IMR-90 (cell line): ENCODE measurements at regions of chr5 and their contacts with region 1.

Region 1: DNA sequence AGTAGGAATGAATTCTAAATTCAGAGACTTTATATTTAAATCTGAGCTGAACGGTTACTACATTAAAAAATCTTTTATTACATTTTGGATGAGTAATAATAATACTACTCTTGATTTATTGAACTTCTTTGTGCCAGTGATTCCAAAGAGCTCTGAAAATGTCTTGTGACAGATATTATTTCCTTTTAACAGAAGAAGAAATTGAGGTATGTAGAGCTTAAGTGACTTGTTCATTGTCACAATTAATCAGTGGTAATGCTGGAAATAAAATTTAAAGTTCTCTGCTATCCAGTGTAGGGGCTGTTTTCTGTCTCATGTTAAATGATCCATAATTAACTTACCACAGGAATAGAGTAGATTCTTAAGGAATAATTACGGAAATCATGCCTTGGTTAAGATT is 335.3 kb downstream of the KIAA0825 start:
- DNase-seq: no peak
- ATAC-seq: no peak
- H3K4me3 ChIP-seq: no peak overlapping the region
- H3K27ac ChIP-seq: no peak overlapping the region
- H3K4me1 ChIP-seq: no peaks in the 10 kb centered on the region
- H3K27me3 ChIP-seq: no peaks in the 10 kb centered on the region
- CTCF ChIP-seq: no peak
- POLR2A ChIP-seq: no peak
- RAD21 ChIP-seq: no peak

Region 2: GRCh38 chr5:94181895-94182294 is 101.2 kb before region 1 on chr5:
- CTCF ChIA-PET with region 1: no interaction called
- POLR2A ChIA-PET with region 1: no interaction called
- dilution Hi-C with region 1: no loop called
- in situ Hi-C with region 1: no loop called
- intact Hi-C with region 1: no loop called
- DNase-seq: peak; percentile 24
- ATAC-seq: peak; percentile 75
- H3K4me3 ChIP-seq: no peak overlapping the region
- H3K27ac ChIP-seq: no peak overlapping the region
- H3K4me1 ChIP-seq: no peaks in the 10 kb centered on the region
- H3K27me3 ChIP-seq: no peaks in the 10 kb centered on the region
- CTCF ChIP-seq: peak; percentile 33
- POLR2A ChIP-seq: no peak
- RAD21 ChIP-seq: no peak

Region 3: DNA sequence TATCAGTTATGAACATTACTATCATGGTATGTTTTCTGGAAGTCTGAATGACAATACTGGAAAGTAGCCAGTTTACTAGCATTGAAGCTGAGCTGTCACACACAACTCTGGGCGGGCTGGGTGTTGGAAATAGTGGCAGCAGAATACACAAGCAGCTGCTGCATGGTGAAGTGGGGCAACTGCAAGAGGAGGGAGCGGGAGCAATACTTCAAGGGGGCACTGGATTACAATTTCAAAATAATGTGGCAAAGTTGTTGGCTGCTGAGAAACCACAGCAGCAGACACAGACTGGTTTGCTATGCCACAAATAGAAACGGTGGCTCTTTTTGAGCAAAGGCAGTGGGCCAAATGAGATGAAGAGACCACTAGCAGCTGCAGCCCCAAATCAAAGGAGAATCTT is 14.9 kb before region 1 on chr5:
- CTCF ChIA-PET with region 1: no interaction called
- POLR2A ChIA-PET with region 1: no interaction called
- dilution Hi-C with region 1: no loop called
- in situ Hi-C with region 1: no loop called
- intact Hi-C with region 1: no loop called
- DNase-seq: no peak
- ATAC-seq: no peak
- H3K4me3 ChIP-seq: no peak overlapping the region
- H3K27ac ChIP-seq: no peak overlapping the region
- H3K4me1 ChIP-seq: no peaks in the 10 kb centered on the region
- H3K27me3 ChIP-seq: no peaks in the 10 kb centered on the region
- CTCF ChIP-seq: no peak
- POLR2A ChIP-seq: no peak
- RAD21 ChIP-seq: no peak

Region 4: GRCh38 chr5:94575196-94575595 is 292.1 kb after region 1 on chr5:
- CTCF ChIA-PET with region 1: no interaction called
- POLR2A ChIA-PET with region 1: no interaction called
- dilution Hi-C with region 1: no loop called
- in situ Hi-C with region 1: no loop called
- intact Hi-C with region 1: loop called (anchors 1 kb)
- DNase-seq: no peak
- ATAC-seq: no peak
- H3K4me3 ChIP-seq: no peak overlapping the region
- H3K27ac ChIP-seq: no peak overlapping the region
- H3K4me1 ChIP-seq: no peaks in the 10 kb centered on the region
- H3K27me3 ChIP-seq: no peaks in the 10 kb centered on the region
- CTCF ChIP-seq: no peak
- POLR2A ChIP-seq: no peak
- RAD21 ChIP-seq: no peak

Region 5: GRCh38 chr5:94613583-94613982 is 330.5 kb after region 1 on chr5:
- CTCF ChIA-PET with region 1: no interaction called
- POLR2A ChIA-PET with region 1: no interaction called
- dilution Hi-C with region 1: no loop called
- in situ Hi-C with region 1: no loop called
- intact Hi-C with region 1: no loop called
- DNase-seq: peak; percentile 13
- ATAC-seq: no peak
- H3K4me3 ChIP-seq: no peak overlapping the region
- H3K27ac ChIP-seq: no peak overlapping the region
- H3K4me1 ChIP-seq: no peaks in the 10 kb centered on the region
- H3K27me3 ChIP-seq: no peaks in the 10 kb centered on the region
- CTCF ChIP-seq: peak; percentile 30; the same call in 1 of the 2 replicates
- POLR2A ChIP-seq: no peak
- RAD21 ChIP-seq: no peak

Region 6: GRCh38 chr5:95184924-95185323 is 901.8 kb after region 1 on chr5:
- CTCF ChIA-PET with region 1: no interaction called
- POLR2A ChIA-PET with region 1: no interaction called
- dilution Hi-C with region 1: no loop called
- in situ Hi-C with region 1: no loop called
- intact Hi-C with region 1: no loop called
- DNase-seq: no peak
- ATAC-seq: no peak
- H3K4me3 ChIP-seq: no peak overlapping the region
- H3K27ac ChIP-seq: no peak overlapping the region
- H3K4me1 ChIP-seq: no peaks in the 10 kb centered on the region
- H3K27me3 ChIP-seq: no peaks in the 10 kb centered on the region
- CTCF ChIP-seq: no peak
- POLR2A ChIP-seq: no peak
- RAD21 ChIP-seq: no peak